Transverse colon (tissue), 4 donors: ENCODE measurements at regions of chr11 and their contacts with region 1.

Region 1: DNA sequence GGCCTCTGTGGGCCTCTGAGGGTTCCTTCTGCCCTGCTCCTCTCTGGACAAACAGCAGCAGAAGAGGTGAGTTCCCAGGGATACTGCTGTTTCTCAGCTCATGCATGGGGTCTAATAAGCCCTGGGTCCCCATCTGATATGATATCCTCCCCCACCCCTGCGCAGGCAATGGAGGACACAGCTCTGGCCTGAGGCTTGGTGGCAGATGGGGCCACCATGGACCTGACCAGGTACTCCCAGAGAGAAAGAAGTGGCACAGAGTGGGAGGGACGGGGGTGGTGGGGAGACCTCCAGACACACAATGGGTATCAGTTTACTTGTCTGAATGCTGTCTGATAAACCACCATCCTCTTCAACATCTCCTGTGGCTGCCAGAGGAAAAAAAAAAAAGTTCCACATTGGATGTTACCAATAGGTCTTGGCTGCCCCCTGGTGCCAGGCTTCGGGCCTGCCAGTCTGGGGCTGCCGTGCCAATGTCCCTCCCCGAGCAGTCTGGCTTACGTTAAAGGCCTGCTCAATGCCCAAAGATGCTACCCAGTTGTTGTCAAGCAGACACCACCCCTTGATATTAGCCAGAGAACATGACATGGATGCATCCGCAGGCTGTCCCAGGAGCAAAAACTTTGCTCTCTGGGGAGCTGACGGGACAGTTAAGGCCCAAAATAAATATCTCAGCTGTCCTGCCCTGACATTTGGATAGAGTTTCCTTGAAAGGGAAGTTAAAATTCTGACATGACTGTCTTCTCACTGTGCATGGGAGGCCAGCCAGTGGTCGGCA is 27.9 kb upstream of the ABCC8 start:
- DNase-seq: peak; percentile 83
- H3K4me3 ChIP-seq: no peak overlapping the region
- H3K27ac ChIP-seq: no peak overlapping the region
- H3K4me1 ChIP-seq: no peaks in the 10 kb centered on the region
- H3K27me3 ChIP-seq: no peaks in the 10 kb centered on the region
- CTCF ChIP-seq: peak; percentile 85 to 90 (median 89)
- EP300 ChIP-seq: peak; percentile 15
- POLR2A ChIP-seq: no peak

Region 2: DNA sequence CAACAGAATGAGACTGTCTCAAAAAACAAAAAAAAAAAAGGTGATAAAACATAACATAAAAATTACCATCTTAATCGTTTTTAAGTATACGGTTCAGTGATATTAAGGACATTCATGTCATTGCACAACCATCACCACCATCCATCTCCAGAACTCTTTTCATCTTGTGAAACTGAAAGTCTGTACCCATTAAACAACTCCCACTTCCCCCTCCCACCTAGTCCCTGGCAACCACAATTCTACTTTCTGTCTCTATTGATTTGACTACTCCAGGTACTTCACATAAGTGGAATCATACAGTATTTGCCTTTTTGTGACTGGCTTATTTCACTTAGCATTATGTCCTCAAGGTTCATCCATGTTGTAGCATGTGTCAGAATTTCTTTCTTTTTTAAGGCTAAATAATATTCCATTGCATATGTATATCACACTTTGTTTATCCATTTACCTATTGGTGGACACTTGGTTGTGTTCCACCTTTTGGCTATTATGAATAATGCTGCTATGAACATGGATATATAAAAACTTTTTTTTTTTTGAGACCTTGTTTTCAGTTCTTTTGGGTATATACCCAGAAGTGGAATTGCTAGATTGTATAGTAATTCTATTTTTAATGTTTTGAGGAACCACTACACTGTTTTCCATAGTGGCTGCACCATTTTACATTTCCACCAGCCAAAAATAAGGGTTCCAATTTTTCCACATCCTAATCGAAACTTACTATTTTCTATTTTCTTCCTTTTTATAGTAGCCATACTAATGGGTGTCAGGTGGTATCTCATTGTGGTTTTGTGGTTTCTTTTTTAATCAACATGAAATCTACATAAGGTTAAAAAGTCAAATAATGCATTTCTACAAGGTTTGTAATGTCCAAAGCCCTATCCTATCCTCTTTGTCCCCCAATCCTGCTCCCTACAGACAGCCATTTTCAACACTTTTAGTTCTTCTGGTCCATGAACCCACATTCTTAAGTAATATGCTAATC is 273.4 kb before region 1 on chr11:
- in situ Hi-C with region 1: loop called in 3 of 4 experiments (anchors 5 to 25 kb)
- intact Hi-C with region 1: no loop called
- DNase-seq: no peak
- H3K4me3 ChIP-seq: no peak overlapping the region
- H3K27ac ChIP-seq: no peak overlapping the region
- H3K4me1 ChIP-seq: peaks cover 0 to 7% (median 0%) of the 10 kb centered on the region in 4 donors
- H3K27me3 ChIP-seq: no peaks in the 10 kb centered on the region
- CTCF ChIP-seq: no peak
- EP300 ChIP-seq: no peak
- POLR2A ChIP-seq: no peak

Region 3: DNA sequence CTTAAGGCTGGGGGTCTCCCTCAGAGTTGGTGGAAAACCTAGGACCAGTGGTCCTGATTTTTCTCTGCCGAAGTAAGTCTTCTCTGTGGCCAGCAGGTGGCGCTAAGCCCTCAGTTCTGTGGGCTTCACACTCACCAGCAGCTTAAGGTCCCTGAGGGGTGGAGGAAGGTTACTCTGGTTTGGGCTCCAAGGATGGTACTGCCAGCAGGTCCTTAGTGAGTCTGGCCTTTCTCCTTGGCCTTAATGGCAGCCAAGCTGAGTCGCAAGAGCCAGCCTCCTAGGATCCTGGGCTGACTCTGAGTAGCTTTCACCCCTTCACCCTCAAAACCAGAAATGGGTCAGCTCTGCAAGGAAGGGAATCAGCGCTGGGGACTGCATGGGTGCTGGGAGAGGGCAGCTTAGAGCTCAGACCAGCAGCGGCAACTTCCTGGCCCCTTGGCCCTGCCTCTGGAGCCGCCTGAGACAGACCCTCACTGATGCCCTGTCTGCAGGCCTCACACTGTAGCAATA is 120.5 kb before region 1 on chr11:
- in situ Hi-C with region 1: loop called in 3 of 4 experiments (anchors 5 to 10 kb)
- intact Hi-C with region 1: loop called (anchors 2 kb)
- DNase-seq: peak; percentile 83
- H3K4me3 ChIP-seq: no peak overlapping the region
- H3K27ac ChIP-seq: no peak overlapping the region
- H3K4me1 ChIP-seq: peaks cover 0 to 5% (median 2%) of the 10 kb centered on the region in 4 donors
- H3K27me3 ChIP-seq: no peaks in the 10 kb centered on the region
- CTCF ChIP-seq: peak; percentile 87 to 94 (median 90)
- EP300 ChIP-seq: no peak
- POLR2A ChIP-seq: no peak

Region 4: DNA sequence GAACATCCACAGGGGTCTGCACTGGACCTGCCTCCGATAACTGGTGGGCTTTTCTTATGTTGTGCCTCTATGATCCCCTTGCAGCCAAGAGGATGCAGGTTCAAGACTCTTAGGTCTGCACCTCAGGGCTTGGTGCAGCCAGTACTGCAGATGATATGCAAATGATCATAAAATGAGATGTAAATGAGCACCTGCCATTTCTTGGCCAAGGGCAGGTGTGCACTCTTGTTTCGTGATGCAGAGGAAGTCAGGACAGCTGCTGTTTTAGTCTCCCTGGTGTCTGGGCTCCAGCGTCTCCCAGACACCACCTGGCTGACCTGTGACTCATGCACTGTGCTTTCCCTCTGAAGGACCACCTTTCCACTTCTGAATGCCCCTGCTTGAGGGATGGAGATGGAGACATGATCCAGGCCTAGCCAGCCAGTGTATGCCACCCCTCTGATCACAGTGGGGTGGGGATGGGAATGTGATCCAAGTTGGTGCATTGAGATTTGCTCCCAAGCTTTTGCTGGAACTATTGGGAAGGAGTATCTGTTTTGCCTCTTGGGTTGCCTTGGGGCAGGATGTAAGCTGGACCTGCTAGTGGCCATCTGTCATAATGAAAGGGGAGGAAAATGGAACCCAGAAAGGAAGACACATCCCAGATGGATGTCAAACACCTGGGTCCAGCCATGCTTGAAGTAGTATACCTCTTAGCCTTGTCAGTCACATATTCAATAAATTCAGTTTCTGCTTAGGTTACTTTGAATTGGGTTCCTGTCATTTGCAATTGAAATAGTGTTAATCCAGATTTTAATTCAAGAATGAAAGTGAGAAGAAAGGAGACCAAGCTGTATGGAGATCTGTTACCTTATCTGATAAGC is 112.8 kb before region 1 on chr11:
- in situ Hi-C with region 1: loop called in 2 of 4 experiments (anchors 5 to 10 kb)
- intact Hi-C with region 1: no loop called
- DNase-seq: no peak
- H3K4me3 ChIP-seq: no peak overlapping the region
- H3K27ac ChIP-seq: no peak overlapping the region
- H3K4me1 ChIP-seq: peaks cover 0 to 5% (median 3%) of the 10 kb centered on the region in 4 donors
- H3K27me3 ChIP-seq: no peaks in the 10 kb centered on the region
- CTCF ChIP-seq: no peak
- EP300 ChIP-seq: no peak
- POLR2A ChIP-seq: no peak

Region 5: DNA sequence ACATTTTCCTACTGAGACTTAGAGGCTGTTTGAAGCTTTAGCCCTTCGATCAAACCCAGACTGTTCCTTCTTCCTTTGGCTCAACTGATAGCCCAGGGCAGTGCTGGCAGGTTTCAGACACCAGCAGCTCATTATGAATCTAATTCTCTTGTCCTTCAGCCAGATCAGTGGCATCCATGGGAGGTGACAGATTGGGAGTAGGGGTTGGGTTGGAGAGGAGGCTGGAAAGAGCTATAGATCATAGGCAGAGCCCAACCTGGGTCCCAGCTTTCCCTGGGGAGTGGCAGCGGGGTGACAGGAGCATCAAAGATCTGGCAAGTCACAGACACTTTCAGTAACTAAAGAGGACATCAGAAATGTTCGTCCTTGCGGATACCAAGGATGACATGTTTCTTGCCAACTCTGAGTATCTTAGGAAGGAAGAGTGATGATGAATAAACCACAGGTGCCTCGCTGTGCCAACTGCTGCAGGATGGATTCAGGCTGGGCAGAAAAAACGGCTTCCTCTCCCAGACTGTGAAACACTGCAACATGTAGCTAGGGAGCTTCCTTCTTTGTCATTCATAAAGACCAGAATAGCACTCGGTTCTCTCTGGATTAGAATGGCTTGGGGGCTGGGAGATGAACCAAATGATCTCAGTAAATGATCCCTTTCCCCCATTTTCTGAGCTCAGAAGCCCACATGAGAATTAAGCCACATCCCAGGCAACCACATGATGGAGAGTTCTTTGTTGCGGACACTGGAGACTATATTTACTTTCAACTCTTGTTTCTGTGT is 46.9 kb before region 1 on chr11:
- in situ Hi-C with region 1: no loop called
- intact Hi-C with region 1: no loop called
- DNase-seq: no peak
- H3K4me3 ChIP-seq: no peak overlapping the region
- H3K27ac ChIP-seq: no peak overlapping the region
- H3K4me1 ChIP-seq: no peaks in the 10 kb centered on the region
- H3K27me3 ChIP-seq: peaks cover 4% of the 10 kb centered on the region
- CTCF ChIP-seq: no peak
- EP300 ChIP-seq: no peak
- POLR2A ChIP-seq: no peak